Endothelial cell of umbilical vein (primary cell): ENCODE measurements at regions of chr1 and their contacts with region 1.

Region 1: DNA sequence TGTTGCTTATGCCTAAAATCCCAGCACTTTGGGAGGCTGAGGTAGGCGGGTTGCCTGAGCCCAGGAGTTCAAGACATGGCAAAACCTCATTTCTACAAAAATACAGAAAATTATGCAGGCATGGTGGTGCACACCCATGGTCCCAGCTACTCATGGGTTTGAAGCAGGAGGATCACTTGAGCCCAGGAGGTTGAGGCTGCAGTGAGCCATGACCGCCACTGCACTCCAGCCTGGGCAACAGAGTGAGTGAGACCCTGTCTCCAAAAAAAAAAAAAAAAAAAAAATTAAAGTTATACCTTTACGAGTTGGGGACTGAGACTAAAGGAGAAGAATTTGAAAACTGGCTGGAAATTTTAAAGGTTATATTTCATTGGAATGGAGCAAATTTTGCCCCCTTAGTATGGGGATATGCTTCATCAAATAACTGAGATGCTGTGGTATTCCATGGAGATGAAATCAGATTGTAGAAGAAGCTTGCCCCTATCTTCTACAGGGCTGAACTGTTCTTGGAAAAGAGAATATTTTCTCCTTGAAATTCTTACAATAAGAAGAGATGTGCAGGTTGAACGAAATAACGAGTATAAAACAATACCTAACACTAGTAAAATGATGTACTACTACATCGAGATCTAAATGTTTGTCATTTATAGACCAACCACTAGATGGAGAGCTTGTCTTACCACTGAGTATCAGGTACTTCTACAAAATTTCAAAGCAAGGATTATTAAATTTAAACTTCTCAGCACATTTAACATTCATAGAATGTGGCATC is 34.9 kb upstream of the SCYL3 start:
- DNase-seq: peak; percentile 55
- H3K4me3 ChIP-seq: no peak overlapping the region
- H3K27ac ChIP-seq: no peak overlapping the region
- H3K4me1 ChIP-seq: no peaks in the 10 kb centered on the region
- H3K27me3 ChIP-seq: no peaks in the 10 kb centered on the region
- CTCF ChIP-seq: peak; percentile 30 to 49
- POLR2A ChIP-seq: no peak

Region 2: DNA sequence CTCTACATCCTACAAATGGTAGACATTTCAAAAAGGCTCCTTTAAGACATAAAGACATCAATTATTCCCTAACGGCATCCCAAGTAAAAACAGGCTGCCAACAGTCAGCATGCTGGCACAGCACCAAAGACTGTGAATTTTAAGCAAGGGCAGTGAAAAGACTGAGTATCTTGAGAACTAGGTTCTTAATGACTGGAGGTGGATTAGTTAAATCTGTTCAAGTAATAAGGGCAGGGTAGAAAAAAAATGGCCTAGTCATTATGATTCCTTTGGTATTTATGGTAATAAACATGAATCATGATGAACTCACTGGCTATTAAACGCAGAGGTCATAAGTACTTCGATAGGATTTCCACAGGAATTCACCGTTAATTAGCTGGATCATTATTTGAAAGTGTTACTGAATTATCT is 70.7 kb after region 1 on chr1:
- CTCF ChIA-PET with region 1: no interaction called
- POLR2A ChIA-PET with region 1: no interaction called
- dilution Hi-C with region 1: no loop called
- intact Hi-C with region 1: no loop called
- DNase-seq: peak; percentile 64
- H3K4me3 ChIP-seq: no peak overlapping the region
- H3K27ac ChIP-seq: no peak overlapping the region
- H3K4me1 ChIP-seq: peaks cover 9% of the 10 kb centered on the region
- H3K27me3 ChIP-seq: no peaks in the 10 kb centered on the region
- CTCF ChIP-seq: no peak
- POLR2A ChIP-seq: no peak

Region 3: GRCh38 chr1:170074250-170075157 is 145.9 kb after region 1 on chr1 and contains the start of gene KIFAP3:
- CTCF ChIA-PET with region 1: no interaction called
- POLR2A ChIA-PET with region 1: no interaction called
- dilution Hi-C with region 1: no loop called
- intact Hi-C with region 1: loop called (anchors 1 kb)
- DNase-seq: peak; percentile 98
- H3K4me3 ChIP-seq: peak within 1 kb of the TSS; percentile 41 to 77 (median 65)
- H3K27ac ChIP-seq: peak within 1 kb of the TSS; percentile 2
- H3K4me1 ChIP-seq: peaks cover 7% of the 10 kb centered on the region
- H3K27me3 ChIP-seq: no peaks in the 10 kb centered on the region
- CTCF ChIP-seq: peak; percentile 45 to 57
- POLR2A ChIP-seq: no peak
- total RNA-seq, gene KIFAP3: 17.5 and 19.6 TPM in 2 replicates

Region 4: DNA sequence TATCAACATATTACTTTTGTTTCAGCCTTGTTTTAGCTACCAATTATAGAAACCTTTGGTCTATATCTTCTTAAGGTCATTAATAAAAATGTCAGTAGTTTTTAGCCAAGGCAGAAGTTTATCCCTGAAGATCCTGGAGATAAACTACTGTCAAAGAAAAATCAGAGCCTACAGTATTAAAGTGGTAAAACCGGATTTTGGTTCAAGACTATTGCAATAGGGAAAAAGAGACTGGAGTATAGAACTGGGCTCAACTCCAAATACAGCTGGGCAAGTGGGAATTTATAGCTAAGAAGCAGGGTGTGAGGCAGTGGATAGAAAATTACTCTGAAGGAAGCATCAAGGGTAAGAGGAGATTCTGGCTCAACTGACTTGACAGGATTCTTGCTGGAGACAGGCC is 207.5 kb after region 1 on chr1:
- CTCF ChIA-PET with region 1: no interaction called
- POLR2A ChIA-PET with region 1: no interaction called
- dilution Hi-C with region 1: no loop called
- intact Hi-C with region 1: no loop called
- DNase-seq: no peak
- H3K4me3 ChIP-seq: no peak overlapping the region
- H3K27ac ChIP-seq: no peak overlapping the region
- H3K4me1 ChIP-seq: no peaks in the 10 kb centered on the region
- H3K27me3 ChIP-seq: no peaks in the 10 kb centered on the region
- CTCF ChIP-seq: no peak
- POLR2A ChIP-seq: no peak

Region 5: DNA sequence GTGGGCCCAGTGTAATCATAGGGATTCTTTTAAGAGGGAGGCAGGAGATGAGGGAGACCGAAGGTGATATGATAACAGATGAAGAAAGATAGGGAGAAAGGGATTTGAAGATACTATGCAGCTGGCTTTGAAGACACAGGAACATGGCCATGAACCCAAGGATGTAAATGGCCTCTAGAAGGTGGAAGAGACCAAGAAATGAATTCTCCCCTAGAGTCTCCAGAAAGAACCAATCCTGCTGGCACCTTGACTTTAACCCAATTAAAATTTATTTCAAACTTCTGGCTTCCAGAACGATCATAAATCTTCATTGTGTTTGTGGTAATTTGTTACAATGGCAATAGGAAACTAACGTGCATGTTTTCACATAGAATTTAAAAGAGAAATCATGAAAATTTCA is 508.3 kb after region 1 on chr1:
- CTCF ChIA-PET with region 1: no interaction called
- POLR2A ChIA-PET with region 1: no interaction called
- dilution Hi-C with region 1: no loop called
- intact Hi-C with region 1: loop called (anchors 5 kb)
- DNase-seq: peak; percentile 28
- H3K4me3 ChIP-seq: no peak overlapping the region
- H3K27ac ChIP-seq: no peak overlapping the region
- H3K4me1 ChIP-seq: no peaks in the 10 kb centered on the region
- H3K27me3 ChIP-seq: no peaks in the 10 kb centered on the region
- CTCF ChIP-seq: peak in 1 of 2 donors; percentile 27
- POLR2A ChIP-seq: no peak

Region 6: GRCh38 chr1:170664828-170665612 is 736.4 kb after region 1 on chr1:
- CTCF ChIA-PET with region 1: interaction called, 3 read pairs
- POLR2A ChIA-PET with region 1: no interaction called
- dilution Hi-C with region 1: no loop called
- intact Hi-C with region 1: loop called (anchors 1 kb)
- DNase-seq: peak; percentile 43
- H3K4me3 ChIP-seq: peak overlapping the region; percentile 36 to 63 (median 46)
- H3K27ac ChIP-seq: no peak overlapping the region
- H3K4me1 ChIP-seq: peaks cover 17% of the 10 kb centered on the region
- H3K27me3 ChIP-seq: peaks cover 50% of the 10 kb centered on the region in 2 experiments
- CTCF ChIP-seq: peak in 1 of 2 donors; percentile 55
- POLR2A ChIP-seq: no peak

Region 7: GRCh38 chr1:170765712-170766330 is 837.2 kb after region 1 on chr1:
- CTCF ChIA-PET with region 1: no interaction called
- POLR2A ChIA-PET with region 1: no interaction called
- dilution Hi-C with region 1: no loop called
- intact Hi-C with region 1: loop called (anchors 2 kb)
- DNase-seq: peak; percentile 32
- H3K4me3 ChIP-seq: no peak overlapping the region
- H3K27ac ChIP-seq: no peak overlapping the region
- H3K4me1 ChIP-seq: no peaks in the 10 kb centered on the region
- H3K27me3 ChIP-seq: no peaks in the 10 kb centered on the region
- CTCF ChIP-seq: peak; percentile 19 to 39
- POLR2A ChIP-seq: no peak

Region 8: GRCh38 chr1:170929835-170930554 is 1001.4 kb after region 1 on chr1:
- CTCF ChIA-PET with region 1: interaction called, 37 read pairs
- POLR2A ChIA-PET with region 1: no interaction called
- dilution Hi-C with region 1: no loop called
- intact Hi-C with region 1: loop called (anchors 1 kb)
- DNase-seq: peak; percentile 56
- H3K4me3 ChIP-seq: no peak overlapping the region
- H3K27ac ChIP-seq: no peak overlapping the region
- H3K4me1 ChIP-seq: no peaks in the 10 kb centered on the region
- H3K27me3 ChIP-seq: no peaks in the 10 kb centered on the region
- CTCF ChIP-seq: peak; percentile 56 to 59
- POLR2A ChIP-seq: no peak